Naive thymus-derived CD4-positive, alpha-beta T cell (primary cell): ENCODE measurements at regions of chr17 and their contacts with region 1.

Region 1: GRCh38 chr17:20155258-20156195 is 146.4 kb downstream of the SPECC1 start:
- DNase-seq: peak; percentile 88 to 94 (median 91)
- ATAC-seq: peak; percentile 99
- H3K4me3 ChIP-seq: peak overlapping the region; percentile 58
- H3K4me3 Mint-ChIP-seq: no peak overlapping the region
- H3K27ac ChIP-seq: peak overlapping the region; percentile 33
- H3K27ac Mint-ChIP-seq: no peak overlapping the region
- H3K4me1 ChIP-seq: peaks cover 6 to 15% of the 10 kb centered on the region in 2 donors
- H3K4me1 Mint-ChIP-seq: peaks cover 0 to 7% (median 4%) of the 10 kb centered on the region in 7 donors
- H3K27me3 ChIP-seq: peaks cover 0 to 2% of the 10 kb centered on the region in 2 donors
- H3K27me3 Mint-ChIP-seq: peaks cover 0 to 23% (median 0%) of the 10 kb centered on the region in 5 donors

Region 2: DNA sequence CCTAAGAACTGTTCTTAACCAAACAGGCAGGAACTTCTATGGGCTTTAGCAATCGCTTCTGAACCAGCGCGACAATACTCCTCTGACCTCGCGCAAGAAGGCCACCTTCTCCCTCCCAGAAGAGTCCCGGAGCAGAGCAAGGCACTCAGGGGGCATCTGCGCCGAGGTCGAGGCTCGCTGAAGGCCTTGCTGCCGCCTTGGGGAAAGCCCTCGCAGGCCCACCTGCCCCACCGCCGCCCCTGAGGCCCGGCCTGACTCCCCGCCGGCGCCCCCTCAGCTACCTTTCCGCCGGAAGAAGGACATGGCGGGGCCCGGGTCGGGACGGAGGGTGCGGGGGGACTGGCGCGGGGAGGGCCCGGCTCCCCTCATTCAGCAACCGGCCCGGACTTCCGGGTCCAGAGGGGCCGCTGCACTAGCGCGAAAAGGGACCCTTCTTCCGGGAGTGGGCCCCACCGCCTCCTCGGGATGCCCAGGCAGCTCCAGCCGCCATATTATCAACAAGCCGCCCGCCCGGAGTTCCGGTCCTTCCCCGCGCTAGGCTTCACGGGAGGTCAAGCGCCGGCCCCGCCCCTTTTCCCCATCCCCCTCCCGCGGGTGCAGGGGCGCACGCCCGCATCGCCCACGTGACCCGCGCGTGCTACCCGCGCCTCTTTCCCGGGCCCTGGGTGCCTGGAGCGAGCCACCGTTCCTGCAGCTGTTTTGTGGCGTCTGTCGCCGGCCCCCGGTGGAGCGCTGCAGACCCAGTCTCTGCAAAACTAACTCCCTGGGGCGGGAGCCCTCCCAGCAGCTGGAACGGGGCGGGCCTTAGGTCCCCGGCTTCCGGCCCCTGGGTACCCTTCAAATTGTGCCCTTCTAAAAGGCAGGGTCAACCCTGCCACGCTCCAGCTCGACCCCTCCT is 178.0 kb before region 1 on chr17 and contains the start of gene AKAP10:
- CTCF ChIA-PET with region 1: no interaction called
- POLR2A ChIA-PET with region 1: interaction called, 3 read pairs
- intact Hi-C with region 1: loop called (anchors 1 to 2 kb)
- DNase-seq: peak; percentile 78 to 96 (median 86)
- ATAC-seq: peak; percentile 94
- H3K4me3 ChIP-seq: peak within 1 kb of the TSS; percentile 85
- H3K4me3 Mint-ChIP-seq: peak within 1 kb of the TSS; percentile 88 to 98 (median 96)
- H3K27ac ChIP-seq: peak within 1 kb of the TSS; percentile 78
- H3K27ac Mint-ChIP-seq: peak within 1 kb of the TSS; percentile 94 to 98 (median 96)
- H3K4me1 ChIP-seq: peaks cover 8 to 11% of the 10 kb centered on the region in 2 donors
- H3K4me1 Mint-ChIP-seq: peaks cover 28 to 55% (median 52%) of the 10 kb centered on the region in 7 donors
- H3K27me3 ChIP-seq: no peaks in the 10 kb centered on the region
- H3K27me3 Mint-ChIP-seq: no peaks in the 10 kb centered on the region
- total RNA-seq, gene AKAP10: 40.5 to 69.0 (median 51.0) TPM

Region 3: GRCh38 chr17:20121359-20122253 is 33.9 kb before region 1 on chr17:
- CTCF ChIA-PET with region 1: no interaction called
- POLR2A ChIA-PET with region 1: no interaction called
- intact Hi-C with region 1: loop called (anchors 2 to 5 kb)
- DNase-seq: peak; percentile 42 to 71 (median 64)
- ATAC-seq: peak; percentile 80
- H3K4me3 ChIP-seq: no peak overlapping the region
- H3K4me3 Mint-ChIP-seq: no peak overlapping the region
- H3K27ac ChIP-seq: no peak overlapping the region
- H3K27ac Mint-ChIP-seq: no peak overlapping the region
- H3K4me1 ChIP-seq: no peaks in the 10 kb centered on the region
- H3K4me1 Mint-ChIP-seq: peaks cover 0 to 3% (median 0%) of the 10 kb centered on the region in 7 donors
- H3K27me3 ChIP-seq: no peaks in the 10 kb centered on the region
- H3K27me3 Mint-ChIP-seq: peaks cover 0 to 18% (median 0%) of the 10 kb centered on the region in 5 donors

Region 4: GRCh38 chr17:20202141-20202621 is 46.7 kb after region 1 on chr17:
- CTCF ChIA-PET with region 1: no interaction called
- POLR2A ChIA-PET with region 1: no interaction called
- intact Hi-C with region 1: no loop called
- DNase-seq: no peak
- ATAC-seq: no peak
- H3K4me3 ChIP-seq: no peak overlapping the region
- H3K4me3 Mint-ChIP-seq: no peak overlapping the region
- H3K27ac ChIP-seq: no peak overlapping the region
- H3K27ac Mint-ChIP-seq: no peak overlapping the region
- H3K4me1 ChIP-seq: peaks cover 0 to 7% of the 10 kb centered on the region in 2 donors
- H3K4me1 Mint-ChIP-seq: peaks cover 15 to 34% (median 27%) of the 10 kb centered on the region in 7 donors
- H3K27me3 ChIP-seq: no peaks in the 10 kb centered on the region
- H3K27me3 Mint-ChIP-seq: no peaks in the 10 kb centered on the region

Region 5: DNA sequence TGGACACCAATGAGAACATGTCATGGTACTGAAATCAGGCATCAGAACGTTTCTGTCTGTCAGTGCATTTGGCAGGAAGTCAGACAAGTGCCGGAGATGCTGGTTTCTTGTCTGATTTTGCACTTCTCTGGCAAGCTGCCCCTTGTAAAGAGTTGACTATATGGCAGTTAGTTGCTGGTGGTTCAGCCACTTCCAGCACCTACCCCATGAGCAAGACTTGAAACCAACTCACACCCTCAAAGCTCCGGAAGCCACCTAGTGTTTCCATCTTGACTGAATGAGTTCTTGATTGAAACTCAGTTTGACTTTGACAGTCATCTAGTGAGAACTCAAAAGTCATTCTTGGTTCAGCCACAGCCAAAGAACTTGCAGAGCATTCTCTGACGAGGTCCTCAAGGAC is 78.7 kb after region 1 on chr17:
- CTCF ChIA-PET with region 1: no interaction called
- POLR2A ChIA-PET with region 1: no interaction called
- intact Hi-C with region 1: loop called in 1 of 2 experiments (anchors 2 kb)
- DNase-seq: peak in 8 of 9 donors; percentile 58 to 79 (median 69)
- ATAC-seq: peak; percentile 93
- H3K4me3 ChIP-seq: peak overlapping the region; percentile 19
- H3K4me3 Mint-ChIP-seq: peak overlapping the region; percentile 64 to 84 (median 69)
- H3K27ac ChIP-seq: peak overlapping the region; percentile 26
- H3K27ac Mint-ChIP-seq: peak overlapping the region; percentile 74 to 92 (median 88)
- H3K4me1 ChIP-seq: peaks cover 4 to 24% of the 10 kb centered on the region in 2 donors
- H3K4me1 Mint-ChIP-seq: peaks cover 29 to 73% (median 60%) of the 10 kb centered on the region in 7 donors
- H3K27me3 ChIP-seq: no peaks in the 10 kb centered on the region
- H3K27me3 Mint-ChIP-seq: no peaks in the 10 kb centered on the region

Region 6: DNA sequence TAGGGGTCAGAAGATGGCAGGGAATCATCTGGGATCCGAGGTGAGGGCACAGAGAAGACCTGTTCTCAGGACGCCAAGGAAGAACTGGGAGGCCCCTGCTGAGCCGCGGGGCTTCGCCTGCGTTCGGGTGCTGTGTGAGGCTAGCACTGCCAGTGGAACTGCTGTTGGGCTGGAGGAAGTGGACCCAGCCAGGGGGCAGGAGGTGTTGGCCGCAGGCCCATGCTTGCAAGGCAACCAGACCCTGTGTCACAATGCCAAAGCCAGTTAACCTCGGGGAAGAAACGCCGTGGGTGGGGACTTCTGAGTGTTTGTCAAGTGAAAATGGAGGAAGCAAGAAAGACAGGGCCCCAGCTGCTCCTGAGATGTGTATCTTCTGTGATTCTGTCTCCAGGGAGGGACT is 126.3 kb after region 1 on chr17:
- CTCF ChIA-PET with region 1: no interaction called
- POLR2A ChIA-PET with region 1: no interaction called
- intact Hi-C with region 1: loop called in 1 of 2 experiments (anchors 5 kb)
- DNase-seq: no peak
- ATAC-seq: peak; percentile 65
- H3K4me3 ChIP-seq: no peak overlapping the region
- H3K4me3 Mint-ChIP-seq: peak overlapping the region in 1 of 10 donors; percentile 45
- H3K27ac ChIP-seq: no peak overlapping the region
- H3K27ac Mint-ChIP-seq: peak overlapping the region in 5 of 9 donors; percentile 2 to 73 (median 53)
- H3K4me1 ChIP-seq: peaks cover 0 to 24% of the 10 kb centered on the region in 2 donors
- H3K4me1 Mint-ChIP-seq: peaks cover 28 to 68% (median 55%) of the 10 kb centered on the region in 7 donors
- H3K27me3 ChIP-seq: no peaks in the 10 kb centered on the region
- H3K27me3 Mint-ChIP-seq: no peaks in the 10 kb centered on the region

Region 7: DNA sequence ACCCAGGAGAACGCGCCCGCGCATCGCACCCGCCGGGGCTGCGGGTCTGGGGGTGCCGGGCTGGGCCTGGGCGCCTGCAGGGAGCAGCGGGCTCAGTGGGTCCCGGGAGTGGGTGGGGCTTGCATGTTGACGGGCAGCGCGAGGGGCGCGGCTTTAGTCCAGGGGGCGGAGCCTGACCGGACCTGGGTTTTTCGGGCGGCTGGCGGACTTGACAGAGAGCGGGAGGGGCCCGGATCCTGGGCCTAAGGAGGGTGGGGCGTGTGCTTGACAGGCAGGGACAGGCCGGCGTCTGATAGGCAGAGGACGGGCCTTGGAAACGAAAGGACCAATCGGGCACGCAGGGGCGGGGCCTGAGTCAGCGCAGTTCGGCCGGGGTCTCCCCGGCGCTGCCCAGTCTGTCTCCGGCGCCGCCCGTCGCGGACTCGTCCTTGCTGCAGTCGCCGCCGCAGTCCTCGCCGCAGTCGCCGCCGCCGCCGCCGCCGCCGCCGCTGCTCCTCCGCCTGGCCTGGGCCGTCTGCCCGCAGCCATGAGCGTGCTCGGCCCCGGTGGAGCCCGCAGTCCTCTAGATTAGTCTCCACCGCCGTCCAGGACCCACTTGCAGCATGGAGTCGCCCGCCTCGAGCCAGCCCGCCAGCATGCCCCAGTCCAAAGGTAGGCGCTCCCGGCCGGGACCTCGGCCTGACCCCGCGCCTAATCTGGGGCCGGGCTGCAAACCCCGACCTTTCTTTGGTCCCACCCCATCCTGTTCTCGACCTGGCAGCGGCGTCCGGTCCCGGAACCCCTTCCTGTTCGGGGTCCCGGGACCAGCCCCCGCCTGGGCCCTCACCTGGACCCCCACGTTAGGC is 1129.0 kb after region 1 on chr17 and contains the start of gene MAP2K3:
- CTCF ChIA-PET with region 1: no interaction called
- POLR2A ChIA-PET with region 1: no interaction called
- intact Hi-C with region 1: loop called in 1 of 2 experiments (anchors 10 kb)
- DNase-seq: peak; percentile 79 to 98 (median 84)
- ATAC-seq: peak; percentile 78
- H3K4me3 ChIP-seq: peak within 1 kb of the TSS; percentile 90
- H3K4me3 Mint-ChIP-seq: peak within 1 kb of the TSS; percentile 88 to 99 (median 96)
- H3K27ac ChIP-seq: peak within 1 kb of the TSS; percentile 78
- H3K27ac Mint-ChIP-seq: peak within 1 kb of the TSS; percentile 88 to 97 (median 96)
- H3K4me1 ChIP-seq: peaks cover 39 to 40% of the 10 kb centered on the region in 2 donors
- H3K4me1 Mint-ChIP-seq: peaks cover 32 to 57% (median 52%) of the 10 kb centered on the region in 7 donors
- H3K27me3 ChIP-seq: no peaks in the 10 kb centered on the region
- H3K27me3 Mint-ChIP-seq: no peaks in the 10 kb centered on the region
- total RNA-seq, gene MAP2K3: 37.5 to 127 (median 39.2) TPM

Region 8: GRCh38 chr17:21551081-21551881 is 1395.8 kb after region 1 on chr17:
- CTCF ChIA-PET with region 1: no interaction called
- POLR2A ChIA-PET with region 1: no interaction called
- intact Hi-C with region 1: loop called in 1 of 2 experiments (anchors 5 kb)
- DNase-seq: peak; percentile 68 to 89 (median 80)
- ATAC-seq: peak; percentile 96
- H3K4me3 ChIP-seq: peak overlapping the region; percentile 69
- H3K4me3 Mint-ChIP-seq: peak overlapping the region; percentile 78 to 91 (median 88)
- H3K27ac ChIP-seq: peak overlapping the region; percentile 69
- H3K27ac Mint-ChIP-seq: peak overlapping the region in 6 of 9 donors; percentile 16 to 66 (median 46)
- H3K4me1 ChIP-seq: peaks cover 0 to 10% of the 10 kb centered on the region in 2 donors
- H3K4me1 Mint-ChIP-seq: peaks cover 24 to 53% (median 41%) of the 10 kb centered on the region in 7 donors
- H3K27me3 ChIP-seq: no peaks in the 10 kb centered on the region
- H3K27me3 Mint-ChIP-seq: peaks cover 17 to 31% (median 27%) of the 10 kb centered on the region in 5 donors